K562 (cell line): ENCODE measurements at regions of chr2 and their contacts with region 1.

Region 1: GRCh38 chr2:16635791-16636699 is 29.6 kb downstream of the CYRIA start:
- DNase-seq: peak; percentile 56 to 83 (median 64)
- ATAC-seq: peak; percentile 86
- H3K4me3 ChIP-seq: peak overlapping the region; percentile 8; the same call in 1 of the 2 replicates
- H3K27ac ChIP-seq: peak overlapping the region; percentile 88
- H3K4me1 ChIP-seq: peaks cover 21 to 75% of the 10 kb centered on the region in 2 experiments
- H3K27me3 ChIP-seq: no peaks in the 10 kb centered on the region
- CTCF ChIP-seq: no peak; a peak in 1 of 6 replicates
- EP300 ChIP-seq: peak; percentile 54
- POLR2A ChIP-seq: no peak
- RAD21 ChIP-seq: no peak; a peak in 1 of 4 replicates

Region 2: DNA sequence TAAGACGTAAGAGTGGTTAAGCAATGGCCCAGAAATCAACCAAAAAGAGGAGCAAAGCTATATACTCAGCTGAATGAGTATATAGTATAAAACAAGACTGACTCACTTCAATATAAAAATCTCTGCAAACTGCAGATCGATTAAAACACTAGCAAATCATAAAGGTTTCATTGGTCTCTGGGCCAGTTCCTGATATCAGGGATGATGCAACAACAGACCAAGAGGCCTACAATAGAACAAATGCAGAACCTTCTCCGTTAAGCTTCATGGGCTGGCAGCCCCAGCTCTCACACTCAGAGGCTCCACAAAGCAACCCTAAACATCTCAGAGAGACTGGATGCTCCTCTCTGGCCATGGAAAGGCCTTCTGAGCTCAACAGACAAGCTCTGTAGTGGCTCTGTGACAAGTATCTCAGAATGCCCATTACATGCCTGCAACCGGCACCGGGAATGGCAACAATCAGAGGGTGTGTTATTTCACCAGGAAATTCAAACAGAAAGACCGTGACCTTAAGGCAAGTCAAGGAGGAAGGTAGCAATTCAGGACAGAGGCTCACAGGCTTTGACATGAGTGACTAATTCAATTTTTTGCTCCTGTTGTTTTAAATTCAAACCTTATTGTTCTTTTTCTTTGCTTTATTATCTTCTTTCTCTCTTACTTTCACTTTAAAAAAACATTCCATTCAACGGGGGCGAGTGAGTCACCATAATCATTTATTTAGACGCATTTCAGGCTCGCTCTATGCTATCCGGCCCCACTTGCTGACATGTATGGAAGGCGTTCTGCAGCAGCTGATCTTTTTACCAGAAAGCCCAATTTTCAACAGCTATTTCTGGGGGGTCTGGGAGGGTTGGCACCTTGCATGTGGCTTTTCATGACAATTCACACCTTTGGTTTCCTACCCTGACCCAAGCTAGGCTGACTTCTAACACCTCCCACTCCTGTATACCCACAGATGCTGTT is 14.5 kb after region 1 on chr2:
- CTCF ChIA-PET with region 1: no interaction called
- POLR2A ChIA-PET with region 1: interaction called, 15 read pairs
- in situ Hi-C with region 1: no loop called
- intact Hi-C with region 1: loop called (anchors 2 kb)
- DNase-seq: no peak
- ATAC-seq: peak; percentile 63
- H3K4me3 ChIP-seq: no peak overlapping the region
- H3K27ac ChIP-seq: peak overlapping the region; percentile 57; the same call in 1 of the 3 replicates
- H3K4me1 ChIP-seq: peaks cover 10 to 56% of the 10 kb centered on the region in 2 experiments; a peak in 4 of 5 replicates
- H3K27me3 ChIP-seq: no peaks in the 10 kb centered on the region
- CTCF ChIP-seq: no peak
- EP300 ChIP-seq: no peak
- POLR2A ChIP-seq: no peak
- RAD21 ChIP-seq: no peak

Region 3: GRCh38 chr2:17122887-17123501 is 486.9 kb after region 1 on chr2:
- CTCF ChIA-PET with region 1: no interaction called
- POLR2A ChIA-PET with region 1: no interaction called
- in situ Hi-C with region 1: no loop called
- intact Hi-C with region 1: loop called (anchors 10 kb)
- DNase-seq: peak; percentile 69 to 93 (median 79)
- ATAC-seq: peak; percentile 89
- H3K4me3 ChIP-seq: no peak overlapping the region
- H3K27ac ChIP-seq: peak overlapping the region; percentile 63
- H3K4me1 ChIP-seq: peaks cover 13 to 69% of the 10 kb centered on the region in 2 experiments
- H3K27me3 ChIP-seq: no peaks in the 10 kb centered on the region
- CTCF ChIP-seq: no peak
- EP300 ChIP-seq: peak; percentile 97
- POLR2A ChIP-seq: no peak; the same call in 1 of the 2 replicates
- RAD21 ChIP-seq: no peak